ENCODE measurements at regions of chr19 and their contacts with region 1.

Region 1: DNA sequence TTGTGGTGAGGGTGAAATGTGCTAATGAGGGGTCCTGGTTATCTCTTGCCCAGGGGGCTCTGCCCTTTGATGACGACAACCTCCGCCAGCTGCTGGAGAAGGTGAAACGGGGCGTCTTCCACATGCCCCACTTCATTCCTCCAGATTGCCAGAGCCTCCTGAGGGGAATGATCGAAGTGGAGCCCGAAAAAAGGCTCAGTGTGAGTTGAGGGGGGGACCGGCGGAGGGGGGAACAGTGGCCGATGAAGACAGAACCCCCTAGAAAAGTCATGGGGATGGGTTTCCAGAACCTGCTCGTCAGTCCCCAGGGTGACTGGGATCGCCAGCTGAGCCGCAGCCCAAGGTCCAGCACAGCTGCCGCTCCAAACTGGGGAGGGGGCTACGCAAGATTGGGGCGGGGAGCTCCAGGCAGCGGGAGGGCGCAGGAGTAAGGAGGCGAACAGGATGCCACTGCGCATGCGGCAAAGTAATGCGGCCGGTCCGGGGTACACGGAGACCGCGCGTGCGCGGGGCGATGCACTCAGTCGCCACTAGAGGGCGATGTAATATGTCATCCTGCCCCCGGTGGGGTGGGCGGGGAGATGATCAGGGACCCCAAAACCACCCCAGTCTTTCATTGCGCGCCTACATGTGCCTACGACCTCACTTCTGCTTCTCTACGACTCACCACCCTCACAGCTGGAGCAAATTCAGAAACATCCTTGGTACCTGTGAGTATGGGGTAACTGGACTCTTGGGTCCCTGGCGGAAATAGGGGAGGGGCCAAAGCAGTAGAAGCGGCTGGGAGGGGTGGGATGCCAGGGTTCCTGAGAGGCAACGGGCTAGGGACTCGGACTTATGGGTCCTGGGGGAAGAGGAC is 17.9 kb downstream of the BRSK1 start:
- DNase-seq: peak; percentile 97
- CTCF ChIP-seq: peak; percentile 92

Region 2: DNA sequence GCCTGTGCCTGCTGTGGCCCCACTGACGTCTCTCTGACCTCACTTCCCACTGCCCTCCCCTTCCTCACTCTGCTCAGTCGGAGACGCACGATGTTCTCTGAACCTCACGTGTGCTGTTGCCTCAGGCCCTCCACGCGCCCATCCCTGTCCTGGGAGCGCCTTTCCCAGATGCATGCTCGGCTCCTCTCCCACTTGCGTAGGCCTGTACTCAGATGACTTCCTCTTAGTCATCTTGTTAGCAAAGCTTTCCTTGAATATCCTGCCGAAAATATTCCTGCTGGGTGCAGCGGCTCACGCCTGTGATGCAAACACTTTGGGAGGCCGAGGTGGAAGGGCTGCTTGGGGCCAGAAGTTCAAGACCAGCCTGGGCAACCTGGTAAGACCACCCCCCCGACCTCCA is 112.3 kb before region 1 on chr19:
- CTCF ChIA-PET with region 1: no interaction called
- POLR2A ChIA-PET with region 1: no interaction called
- DNase-seq: no peak
- CTCF ChIP-seq: no peak

Region 3: GRCh38 chr19:55259540-55260210 is 42.0 kb before region 1 on chr19:
- CTCF ChIA-PET with region 1: interaction called, 9 read pairs
- POLR2A ChIA-PET with region 1: interaction called, 14 read pairs
- DNase-seq: no peak
- CTCF ChIP-seq: no peak

Region 4: GRCh38 chr19:55312621-55313512 is 11.2 kb after region 1 on chr19:
- CTCF ChIA-PET with region 1: interaction called, 42 read pairs
- POLR2A ChIA-PET with region 1: no interaction called
- DNase-seq: no peak
- CTCF ChIP-seq: no peak

Region 5: GRCh38 chr19:55339048-55339888 is 37.6 kb after region 1 on chr19 and contains the start of gene KMT5C:
- CTCF ChIA-PET with region 1: interaction called, 43 read pairs
- POLR2A ChIA-PET with region 1: no interaction called
- DNase-seq: peak; percentile 98
- CTCF ChIP-seq: no peak

Region 6: DNA sequence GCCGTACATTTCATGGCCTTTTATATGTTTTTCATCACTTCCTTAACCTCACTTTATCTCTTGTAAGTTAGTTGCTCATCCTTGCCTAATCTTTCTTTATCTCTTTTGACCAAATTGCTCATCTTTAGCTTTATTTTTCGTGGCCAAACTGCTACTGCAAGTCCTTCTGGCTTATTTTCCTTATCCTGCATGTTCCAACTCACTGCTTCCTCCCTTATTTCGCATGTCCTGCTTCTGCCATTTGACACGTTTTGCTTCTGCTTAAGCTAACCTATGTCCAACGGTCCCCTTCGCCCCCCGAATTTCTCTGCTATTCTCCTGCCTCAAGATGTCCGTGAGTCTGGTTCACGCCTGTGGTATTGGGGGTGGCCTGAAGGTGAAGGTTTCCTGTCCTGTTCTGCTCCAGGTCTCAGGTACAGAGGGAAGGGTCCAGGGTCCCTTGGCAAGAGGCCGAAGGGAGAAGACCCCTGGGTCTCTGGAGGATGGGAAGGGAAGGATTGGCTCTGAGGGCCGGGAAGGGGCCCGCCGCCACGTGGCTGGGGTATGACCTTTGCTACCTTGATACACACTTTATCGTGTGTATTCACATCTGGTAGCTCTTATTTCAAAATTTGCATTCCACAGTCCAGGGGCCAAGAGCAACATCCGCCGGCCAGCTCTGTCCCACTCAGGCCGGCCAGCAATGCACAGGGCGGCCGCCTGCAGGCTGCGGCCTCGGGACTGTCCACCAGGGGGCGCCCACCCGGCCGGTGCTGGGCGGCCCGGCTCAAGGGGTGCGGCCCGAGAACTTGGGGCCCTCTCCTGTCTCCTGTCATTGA is 165.8 kb after region 1 on chr19:
- CTCF ChIA-PET with region 1: interaction called, 10 read pairs
- POLR2A ChIA-PET with region 1: no interaction called
- DNase-seq: peak; percentile 85
- CTCF ChIP-seq: peak; percentile 97

Region 7: DNA sequence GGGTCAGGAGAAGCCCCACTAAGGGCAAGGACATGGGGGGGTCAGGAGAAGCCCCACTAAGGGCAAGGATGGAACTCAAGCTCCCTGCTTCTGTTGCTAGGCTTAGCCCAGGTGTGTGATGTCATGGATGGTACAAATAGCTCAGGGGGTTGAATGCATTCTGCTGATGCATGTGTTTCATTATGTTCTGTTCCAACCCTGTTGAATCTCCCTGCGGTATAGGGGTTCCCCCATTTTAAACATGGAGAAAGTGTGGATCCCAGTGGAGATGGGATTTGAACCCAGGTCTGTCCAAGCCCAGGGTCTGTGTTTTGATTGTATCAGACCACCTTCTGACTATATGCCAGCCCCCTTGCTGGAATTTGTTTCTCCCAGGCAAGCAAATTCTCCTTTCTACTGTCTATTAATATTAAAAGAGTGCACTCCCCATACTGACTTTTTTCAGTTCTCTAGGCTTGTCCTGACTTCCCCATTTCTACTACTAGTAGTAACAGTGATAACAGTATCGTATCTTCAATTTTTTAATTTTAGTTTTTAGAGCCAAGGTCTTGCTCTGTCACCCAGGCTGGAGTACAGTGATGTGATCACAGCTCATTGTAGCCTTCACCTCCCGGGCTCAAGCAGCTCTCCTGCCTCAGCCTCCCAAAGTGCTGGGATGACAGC is 310.4 kb after region 1 on chr19:
- CTCF ChIA-PET with region 1: no interaction called
- POLR2A ChIA-PET with region 1: no interaction called
- DNase-seq: no peak
- CTCF ChIP-seq: no peak